Psoas muscle (tissue), 8 donors: ENCODE measurements at regions of chr9 and their contacts with region 1.

Region 1: DNA sequence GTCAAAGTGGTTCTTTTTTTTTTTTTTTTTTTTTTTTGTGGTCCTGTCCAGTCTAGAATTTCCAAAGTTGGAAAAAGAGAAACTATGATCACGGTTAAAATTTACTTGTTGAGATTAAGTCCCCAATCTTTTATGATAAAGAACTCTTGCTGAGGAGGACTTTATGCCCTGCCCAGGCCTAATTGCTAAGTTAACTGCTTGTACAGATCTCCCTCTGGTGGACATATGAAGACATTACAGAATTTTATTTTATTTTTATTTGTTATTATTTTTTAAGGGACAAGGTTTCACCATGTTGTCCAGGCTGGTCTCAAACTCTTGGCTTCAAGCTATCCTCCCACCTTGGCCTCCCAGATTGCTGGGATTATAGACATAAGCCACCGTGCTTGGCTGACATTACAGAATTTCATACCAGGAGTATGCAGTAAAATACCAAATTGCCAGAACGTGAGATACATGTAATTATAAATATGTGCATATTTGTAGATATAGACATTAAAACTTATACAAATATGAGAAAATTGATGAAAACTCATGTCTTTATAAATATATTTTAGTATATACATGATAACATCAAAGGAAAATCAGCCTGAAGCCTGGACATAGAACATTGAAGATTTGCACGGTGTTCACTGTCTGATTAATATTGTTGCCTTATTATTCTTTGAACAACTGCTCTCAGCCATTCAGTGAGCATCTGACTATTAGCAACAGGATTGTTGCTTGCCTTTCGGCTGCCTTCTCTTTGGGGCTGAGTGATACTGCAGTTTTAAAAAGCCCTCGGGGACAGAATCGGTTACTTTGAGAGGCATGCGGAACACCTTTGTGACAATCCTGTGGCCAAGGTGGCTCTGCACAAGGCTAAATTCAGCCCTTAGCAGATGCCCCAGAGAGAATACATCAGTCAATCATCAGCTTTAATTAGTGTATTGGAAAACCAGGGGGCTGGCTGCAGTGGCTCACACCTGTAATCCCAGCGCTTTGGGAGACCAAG is 91.0 kb downstream of the RFK start:
- DNase-seq: no peak
- ATAC-seq: peak in 1 of 4 donors; percentile 69
- H3K4me3 ChIP-seq: no peak overlapping the region
- H3K27ac ChIP-seq: no peak overlapping the region
- H3K4me1 ChIP-seq: no peaks in the 10 kb centered on the region
- H3K27me3 ChIP-seq: peaks cover 0 to 4% (median 0%) of the 10 kb centered on the region in 3 donors
- CTCF ChIP-seq: peak; percentile 74

Region 2: GRCh38 chr9:75265525-75265972 is 1037.7 kb before region 1 on chr9:
- intact Hi-C with region 1: loop called (anchors 10 kb)
- DNase-seq: peak in 1 of 2 donors; percentile 13
- ATAC-seq: peak in 3 of 4 donors; percentile 53 to 59 (median 58)
- H3K4me3 ChIP-seq: no peak overlapping the region
- H3K27ac ChIP-seq: no peak overlapping the region
- H3K4me1 ChIP-seq: no peaks in the 10 kb centered on the region
- H3K27me3 ChIP-seq: peaks cover 0 to 2% (median 0%) of the 10 kb centered on the region in 3 donors
- CTCF ChIP-seq: peak; percentile 83

Region 3: GRCh38 chr9:75866273-75866871 is 436.9 kb before region 1 on chr9:
- intact Hi-C with region 1: loop called in 1 of 2 experiments (anchors 10 kb)
- DNase-seq: no peak
- ATAC-seq: no peak
- H3K4me3 ChIP-seq: no peak overlapping the region
- H3K27ac ChIP-seq: no peak overlapping the region
- H3K4me1 ChIP-seq: no peaks in the 10 kb centered on the region
- H3K27me3 ChIP-seq: peaks cover 0 to 3% (median 0%) of the 10 kb centered on the region in 3 donors
- CTCF ChIP-seq: peak; percentile 67

Region 4: DNA sequence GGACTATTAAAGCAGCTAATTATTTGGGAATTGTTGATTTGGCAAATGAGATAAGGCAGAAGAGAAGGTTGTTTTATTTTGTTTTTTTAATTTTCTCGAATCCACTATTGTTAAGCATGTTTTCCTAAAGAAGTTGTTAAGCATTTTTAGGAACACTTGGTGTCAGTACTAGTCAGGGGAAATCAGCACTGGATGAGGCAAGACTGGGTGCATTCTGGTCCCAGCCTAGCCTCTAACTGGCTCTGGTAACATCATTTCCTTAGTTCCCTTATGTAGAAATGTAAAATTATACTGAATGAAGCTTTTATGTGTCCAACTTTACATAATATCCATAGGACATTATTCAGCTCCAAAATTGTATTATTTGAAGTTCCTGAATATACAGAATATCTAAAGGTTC is 216.7 kb before region 1 on chr9:
- intact Hi-C with region 1: loop called (anchors 5 to 10 kb)
- DNase-seq: no peak
- ATAC-seq: no peak
- H3K4me3 ChIP-seq: no peak overlapping the region
- H3K27ac ChIP-seq: no peak overlapping the region
- H3K4me1 ChIP-seq: peaks cover 2% of the 10 kb centered on the region
- H3K27me3 ChIP-seq: no peaks in the 10 kb centered on the region
- CTCF ChIP-seq: no peak

Region 5: DNA sequence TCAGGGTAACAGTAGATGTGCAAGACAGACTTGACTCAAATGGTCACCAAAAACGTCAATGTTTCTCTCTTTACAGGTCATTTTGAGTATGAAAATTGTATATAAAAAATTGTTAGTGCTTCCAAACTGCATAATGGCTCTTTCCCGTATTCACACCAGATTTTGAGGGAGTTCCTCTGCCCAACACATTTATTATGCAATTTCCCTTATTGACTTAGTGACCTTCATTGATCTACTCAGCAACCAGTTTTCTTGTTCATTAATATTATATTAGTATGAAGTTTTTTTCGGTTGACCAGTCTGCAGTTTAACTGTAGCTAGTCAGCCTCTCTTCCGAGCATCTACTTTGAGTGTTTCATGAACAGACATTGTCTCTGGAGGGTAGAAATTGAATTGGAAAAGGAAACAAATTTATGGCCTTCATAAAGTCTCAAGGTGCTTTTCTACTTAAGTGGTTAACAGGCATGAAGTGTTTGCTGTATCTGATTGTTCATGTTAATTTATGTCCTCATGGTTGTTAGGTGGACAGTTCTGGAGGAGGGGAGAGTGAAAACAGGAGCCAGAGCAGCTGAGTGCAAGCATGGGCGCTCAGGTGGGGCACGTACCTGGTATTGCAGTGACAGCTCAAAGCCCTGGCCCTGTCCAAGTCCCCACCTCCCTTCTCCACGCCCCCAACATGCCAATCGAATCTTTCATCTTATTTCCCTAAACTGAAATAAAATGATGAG is 149.2 kb before region 1 on chr9:
- intact Hi-C with region 1: no loop called
- DNase-seq: no peak
- ATAC-seq: no peak
- H3K4me3 ChIP-seq: no peak overlapping the region
- H3K27ac ChIP-seq: no peak overlapping the region
- H3K4me1 ChIP-seq: no peaks in the 10 kb centered on the region
- H3K27me3 ChIP-seq: no peaks in the 10 kb centered on the region
- CTCF ChIP-seq: no peak